ENCODE measurements at regions of chr12 and their contacts with region 1.

Region 1: DNA sequence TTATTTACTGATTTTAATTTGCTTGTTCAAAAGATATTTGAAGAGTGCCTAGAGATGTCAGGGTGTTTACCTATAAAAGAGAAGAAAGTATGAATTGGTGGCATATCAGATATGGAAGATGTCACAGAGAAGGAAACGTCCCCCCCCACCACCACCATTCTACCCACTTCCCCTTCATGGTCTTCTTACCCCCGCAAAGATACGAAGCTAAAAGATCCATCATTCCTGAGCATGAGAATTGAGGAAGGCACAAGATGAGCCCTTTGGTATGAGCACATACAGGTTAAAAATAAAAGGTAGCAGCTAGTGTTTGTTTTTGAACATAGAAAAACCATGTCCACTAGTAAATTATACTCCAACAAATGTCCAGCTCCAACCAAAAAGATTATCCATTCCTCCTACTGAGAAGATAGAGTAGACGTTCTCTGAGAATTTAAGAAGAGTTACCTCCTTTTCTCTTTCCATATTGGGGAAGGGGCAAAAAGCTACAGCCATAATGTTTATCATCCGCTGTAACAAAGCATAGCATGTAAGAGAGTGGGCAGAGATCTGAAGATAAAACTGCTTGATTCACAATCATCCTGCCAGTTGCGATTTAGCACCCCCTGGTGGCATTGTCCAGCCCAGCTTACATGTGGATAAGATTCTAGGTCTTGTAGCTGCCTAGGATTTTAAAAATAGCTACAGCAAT is 29.1 kb downstream of the NFYB start:
- DNase-seq: peak; percentile 69 to 92 (median 88)
- ATAC-seq: peak; percentile 98
- H3K4me3 ChIP-seq: no peak overlapping the region
- H3K4me3 Mint-ChIP-seq: peak overlapping the region; percentile 76
- H3K27ac ChIP-seq: no peak overlapping the region
- H3K27ac Mint-ChIP-seq: peak overlapping the region; percentile 80
- H3K4me1 ChIP-seq: peaks cover 8% of the 10 kb centered on the region
- H3K4me1 Mint-ChIP-seq: peaks cover 15% of the 10 kb centered on the region
- H3K27me3 ChIP-seq: no peaks in the 10 kb centered on the region
- H3K27me3 Mint-ChIP-seq: no peaks in the 10 kb centered on the region
- CTCF ChIP-seq: peak; percentile 74

Region 2: GRCh38 chr12:103877934-103878510 is 230.9 kb before region 1 on chr12:
- CTCF ChIA-PET with region 1: interaction called, 69 read pairs
- POLR2A ChIA-PET with region 1: interaction called, 8 read pairs
- intact Hi-C with region 1: loop called (anchors 1 kb)
- DNase-seq: peak; percentile 5 to 80 (median 48)
- ATAC-seq: peak; percentile 64
- H3K4me3 ChIP-seq: no peak overlapping the region
- H3K4me3 Mint-ChIP-seq: no peak overlapping the region
- H3K27ac ChIP-seq: no peak overlapping the region
- H3K27ac Mint-ChIP-seq: no peak overlapping the region
- H3K4me1 ChIP-seq: peaks cover 6% of the 10 kb centered on the region
- H3K4me1 Mint-ChIP-seq: peaks cover 10% of the 10 kb centered on the region
- H3K27me3 ChIP-seq: no peaks in the 10 kb centered on the region
- H3K27me3 Mint-ChIP-seq: no peaks in the 10 kb centered on the region
- CTCF ChIP-seq: peak; percentile 70

Region 3: DNA sequence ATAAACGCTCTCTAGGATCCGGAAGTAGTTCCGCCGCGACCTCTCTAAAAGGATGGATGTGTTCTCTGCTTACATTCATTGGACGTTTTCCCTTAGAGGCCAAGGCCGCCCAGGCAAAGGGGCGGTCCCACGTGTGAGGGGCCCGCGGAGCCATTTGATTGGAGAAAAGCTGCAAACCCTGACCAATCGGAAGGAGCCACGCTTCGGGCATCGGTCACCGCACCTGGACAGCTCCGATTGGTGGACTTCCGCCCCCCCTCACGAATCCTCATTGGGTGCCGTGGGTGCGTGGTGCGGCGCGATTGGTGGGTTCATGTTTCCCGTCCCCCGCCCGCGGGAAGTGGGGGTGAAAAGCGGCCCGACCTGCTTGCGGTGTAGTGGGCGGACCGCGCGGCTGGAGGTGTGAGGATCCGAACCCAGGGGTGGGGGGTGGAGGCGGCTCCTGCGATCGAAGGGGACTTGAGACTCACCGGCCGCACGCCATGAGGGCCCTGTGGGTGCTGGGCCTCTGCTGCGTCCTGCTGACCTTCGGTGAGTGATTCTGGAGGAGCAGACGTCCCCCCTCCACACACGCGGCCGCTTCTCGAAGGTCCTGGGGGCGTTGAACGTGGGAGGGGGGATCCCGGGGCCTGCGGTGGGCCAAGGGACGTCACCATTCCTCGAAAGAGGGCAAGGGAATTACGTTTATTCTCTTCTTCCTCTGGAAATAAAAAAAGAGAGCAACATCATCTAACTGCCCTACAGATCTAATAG is 178.7 kb before region 1 on chr12 and contains the start of gene HSP90B1:
- CTCF ChIA-PET with region 1: interaction called, 7 read pairs
- POLR2A ChIA-PET with region 1: interaction called, 3 read pairs
- intact Hi-C with region 1: loop called in 1 of 2 experiments (anchors 2 kb)
- DNase-seq: peak; percentile 99 to 100 (median 99)
- ATAC-seq: peak; percentile 74
- H3K4me3 ChIP-seq: peak within 1 kb of the TSS; percentile 67 to 91
- H3K4me3 Mint-ChIP-seq: peak within 1 kb of the TSS; percentile 83
- H3K27ac ChIP-seq: peak within 1 kb of the TSS; percentile 96 to 98
- H3K27ac Mint-ChIP-seq: peak within 1 kb of the TSS; percentile 97
- H3K4me1 ChIP-seq: peaks cover 43% of the 10 kb centered on the region
- H3K4me1 Mint-ChIP-seq: peaks cover 64% of the 10 kb centered on the region
- H3K27me3 ChIP-seq: no peaks in the 10 kb centered on the region
- H3K27me3 Mint-ChIP-seq: no peaks in the 10 kb centered on the region
- CTCF ChIP-seq: no peak
- total RNA-seq, gene HSP90B1: 173 to 179 TPM

Region 4: DNA sequence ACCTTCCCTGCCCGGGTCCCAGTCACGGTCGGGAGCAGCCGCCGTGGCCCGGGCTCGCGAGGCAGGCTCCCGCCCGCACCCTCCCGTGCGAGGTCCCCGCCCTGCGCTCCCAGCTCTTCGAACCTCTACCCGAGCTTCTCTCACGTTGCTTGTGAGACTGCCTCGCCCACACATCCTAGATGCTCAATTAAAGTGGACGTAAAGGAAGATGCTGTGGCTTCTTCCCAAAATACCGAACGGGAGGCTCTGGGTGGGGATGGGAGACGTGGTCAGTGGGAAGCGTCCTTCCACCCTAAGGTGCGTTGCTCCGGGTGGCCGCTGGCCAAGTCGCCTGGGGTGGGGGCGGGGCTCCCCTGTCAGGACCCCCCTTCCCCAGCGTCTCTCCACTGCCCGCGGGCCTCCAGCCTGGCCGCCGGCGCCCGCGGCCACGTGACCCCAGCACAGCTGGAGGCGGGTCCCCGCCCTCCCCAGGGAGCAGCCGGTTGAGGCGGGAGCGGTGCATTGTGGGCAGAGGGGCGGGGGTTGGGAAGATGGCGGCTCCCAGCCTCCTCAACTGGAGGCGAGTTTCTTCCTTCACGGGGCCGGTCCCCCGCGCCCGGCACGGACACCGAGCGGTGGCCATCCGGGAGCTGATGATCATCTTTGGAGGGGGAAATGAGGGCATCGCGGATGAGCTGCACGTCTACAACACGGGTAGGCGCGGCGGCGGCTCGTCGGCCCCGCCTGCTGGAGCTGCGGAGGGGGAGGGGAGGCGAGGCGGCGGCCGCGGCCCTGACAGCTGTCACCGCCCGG is 44.7 kb before region 1 on chr12 and contains the start of gene HCFC2:
- CTCF ChIA-PET with region 1: interaction called, 64 read pairs
- POLR2A ChIA-PET with region 1: interaction called, 9 read pairs
- intact Hi-C with region 1: loop called in 1 of 2 experiments (anchors 2 kb)
- DNase-seq: peak; percentile 71 to 92 (median 87)
- ATAC-seq: peak; percentile 92
- H3K4me3 ChIP-seq: peak within 1 kb of the TSS; percentile 75 to 98
- H3K4me3 Mint-ChIP-seq: peak within 1 kb of the TSS; percentile 95
- H3K27ac ChIP-seq: peak within 1 kb of the TSS; percentile 61 to 64
- H3K27ac Mint-ChIP-seq: peak within 1 kb of the TSS; percentile 93
- H3K4me1 ChIP-seq: peaks cover 7% of the 10 kb centered on the region
- H3K4me1 Mint-ChIP-seq: peaks cover 29% of the 10 kb centered on the region
- H3K27me3 ChIP-seq: peaks cover 0 to 3% of the 10 kb centered on the region in 2 experiments
- H3K27me3 Mint-ChIP-seq: peaks cover 4% of the 10 kb centered on the region
- CTCF ChIP-seq: no peak
- total RNA-seq, gene HCFC2: 13.9 to 16.7 TPM

Region 5: GRCh38 chr12:104097954-104098353 is 10.9 kb before region 1 on chr12:
- CTCF ChIA-PET with region 1: interaction called, 21 read pairs
- POLR2A ChIA-PET with region 1: no interaction called
- intact Hi-C with region 1: no loop called
- DNase-seq: no peak
- ATAC-seq: no peak
- H3K4me3 ChIP-seq: no peak overlapping the region
- H3K4me3 Mint-ChIP-seq: no peak overlapping the region
- H3K27ac ChIP-seq: no peak overlapping the region
- H3K27ac Mint-ChIP-seq: no peak overlapping the region
- H3K4me1 ChIP-seq: no peaks in the 10 kb centered on the region
- H3K4me1 Mint-ChIP-seq: peaks cover 2% of the 10 kb centered on the region
- H3K27me3 ChIP-seq: no peaks in the 10 kb centered on the region
- H3K27me3 Mint-ChIP-seq: no peaks in the 10 kb centered on the region
- CTCF ChIP-seq: no peak